PC-9 (cell line): ENCODE measurements at regions of chr9 and their contacts with region 1.

Region 1: GRCh38 chr9:14428781-14429230 is 114.9 kb upstream of the NFIB start:
- DNase-seq: peak; percentile 37 to 49
- H3K4me3 ChIP-seq: no peak overlapping the region
- H3K27ac ChIP-seq: no peak overlapping the region
- H3K4me1 ChIP-seq: peaks cover 16% of the 10 kb centered on the region; the same call in 1 of the 2 replicates
- H3K27me3 ChIP-seq: no peaks in the 10 kb centered on the region
- CTCF ChIP-seq: peak; percentile 78

Region 2: DNA sequence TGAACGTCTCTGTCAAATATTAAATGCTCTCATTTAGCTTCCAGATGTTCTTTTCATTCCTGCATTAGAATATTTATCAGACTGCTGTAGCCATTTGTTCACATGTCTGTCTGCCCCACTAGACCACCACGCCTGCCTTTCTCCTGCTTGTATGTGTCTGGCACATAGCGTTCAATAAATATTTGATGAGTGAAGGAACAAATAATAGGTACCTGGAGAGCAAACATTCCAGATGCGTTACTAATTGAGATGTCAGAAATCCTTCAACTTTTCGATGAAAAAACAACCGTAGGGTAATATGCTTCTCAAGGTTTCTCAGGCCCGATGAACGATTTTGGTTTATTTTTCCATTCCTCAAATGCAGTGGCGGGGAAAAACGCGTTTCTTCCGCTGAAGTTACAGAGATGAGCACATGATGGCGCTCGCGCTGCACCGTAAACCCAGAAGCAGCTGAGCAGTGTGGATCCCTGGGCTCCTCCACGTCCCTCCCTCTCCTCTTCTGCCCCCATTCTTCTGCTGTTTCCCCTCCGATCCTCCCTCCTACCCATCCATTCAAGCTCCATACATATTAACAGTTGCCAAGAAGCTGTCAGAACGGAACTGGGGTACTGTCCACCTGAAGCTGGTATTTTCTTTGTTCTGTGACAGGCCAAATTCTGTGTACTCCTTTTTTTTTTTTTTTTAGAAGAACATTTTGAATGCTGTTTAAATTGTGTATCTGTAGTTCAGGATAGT is 1394.7 kb before region 1 on chr9:
- CTCF ChIA-PET with region 1: no interaction called
- POLR2A ChIA-PET with region 1: no interaction called
- intact Hi-C with region 1: loop called (anchors 2 kb)
- DNase-seq: peak; percentile 37 to 57
- H3K4me3 ChIP-seq: peak overlapping the region; percentile 37; the same call in 1 of the 2 replicates
- H3K27ac ChIP-seq: no peak overlapping the region
- H3K4me1 ChIP-seq: no peaks in the 10 kb centered on the region
- H3K27me3 ChIP-seq: no peaks in the 10 kb centered on the region
- CTCF ChIP-seq: peak; percentile 75

Region 3: DNA sequence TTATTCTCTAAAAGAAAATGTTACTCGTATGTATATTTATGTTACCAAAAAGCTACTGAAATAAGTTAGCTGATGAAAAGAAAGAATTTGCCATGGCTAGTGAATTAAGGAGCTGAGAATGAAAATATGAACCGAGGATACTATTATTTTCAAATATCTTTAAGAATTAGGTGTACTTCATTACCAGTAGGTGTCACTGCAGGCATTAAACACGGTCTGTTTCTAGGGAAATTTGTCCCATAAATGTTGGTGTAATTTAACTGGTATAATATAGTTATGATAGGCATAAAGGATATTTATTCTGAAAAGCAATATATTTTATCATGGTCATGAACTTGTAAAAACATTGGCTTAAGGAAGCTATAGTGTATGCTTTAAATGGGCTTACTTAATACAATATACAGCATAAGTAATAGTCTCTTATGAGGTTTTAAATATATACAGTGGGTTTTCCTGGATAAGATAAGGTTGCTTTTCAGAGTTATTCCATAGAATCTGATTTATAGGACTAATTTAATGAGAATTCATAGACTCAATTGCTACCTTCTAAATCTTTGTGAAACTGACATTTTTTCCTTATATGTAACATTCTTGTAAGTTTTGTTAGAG is 1076.9 kb before region 1 on chr9:
- CTCF ChIA-PET with region 1: no interaction called
- POLR2A ChIA-PET with region 1: no interaction called
- intact Hi-C with region 1: loop called (anchors 5 kb)
- DNase-seq: no peak
- H3K4me3 ChIP-seq: no peak overlapping the region
- H3K27ac ChIP-seq: no peak overlapping the region
- H3K4me1 ChIP-seq: no peaks in the 10 kb centered on the region
- H3K27me3 ChIP-seq: no peaks in the 10 kb centered on the region
- CTCF ChIP-seq: peak; percentile 63

Region 4: DNA sequence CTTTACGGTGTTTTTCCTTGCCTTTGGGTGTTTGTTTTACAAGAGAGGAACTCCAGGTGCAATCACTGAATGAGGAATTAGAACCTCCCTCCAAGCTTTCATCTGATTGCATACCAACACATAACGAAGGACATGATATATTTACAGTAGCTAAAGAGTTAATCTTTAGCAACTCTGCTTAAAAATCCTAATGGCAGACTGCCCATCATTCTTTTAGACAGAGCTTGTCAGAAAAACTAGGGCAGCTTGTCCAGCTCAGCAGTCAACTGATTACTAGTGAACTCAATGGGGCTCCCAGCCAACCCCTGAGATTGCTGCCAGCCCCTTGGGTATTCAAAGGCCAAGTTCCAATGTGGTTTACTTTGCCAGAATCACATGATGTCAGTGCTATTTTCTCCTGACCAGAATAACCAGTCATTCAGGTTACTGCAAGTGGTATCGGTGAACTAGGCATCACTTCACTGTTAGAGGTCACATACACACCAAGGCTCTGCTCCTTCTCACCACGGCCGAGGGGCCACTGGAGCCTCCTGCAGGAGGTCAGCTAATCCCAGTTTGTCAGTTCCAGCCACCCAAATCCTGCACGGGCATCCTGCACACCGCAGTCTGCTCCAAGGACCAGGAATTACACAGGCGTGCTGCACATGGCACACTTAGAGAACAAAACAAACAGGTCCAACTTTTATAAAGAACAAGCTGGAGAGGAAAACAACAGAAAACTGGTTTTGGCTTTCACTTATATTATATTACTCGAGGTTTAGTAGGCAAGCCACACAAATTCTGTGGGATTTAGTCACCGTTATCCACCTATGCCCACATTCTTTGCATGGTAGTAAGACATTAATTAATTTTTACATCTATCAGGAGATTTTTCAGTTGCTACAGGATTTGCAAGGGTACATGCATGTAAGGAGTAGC is 177.4 kb before region 1 on chr9:
- CTCF ChIA-PET with region 1: no interaction called
- POLR2A ChIA-PET with region 1: no interaction called
- intact Hi-C with region 1: loop called (anchors 5 kb)
- DNase-seq: peak; percentile 81 to 96
- H3K4me3 ChIP-seq: peak overlapping the region; percentile 47; the same call in 1 of the 2 replicates
- H3K27ac ChIP-seq: peak overlapping the region; percentile 98
- H3K4me1 ChIP-seq: peaks cover 60% of the 10 kb centered on the region
- H3K27me3 ChIP-seq: no peaks in the 10 kb centered on the region
- CTCF ChIP-seq: no peak

Region 5: GRCh38 chr9:14281136-14281795 is 147.5 kb before region 1 on chr9:
- CTCF ChIA-PET with region 1: no interaction called
- POLR2A ChIA-PET with region 1: no interaction called
- intact Hi-C with region 1: no loop called
- DNase-seq: no peak
- H3K4me3 ChIP-seq: no peak overlapping the region
- H3K27ac ChIP-seq: no peak overlapping the region
- H3K4me1 ChIP-seq: no peaks in the 10 kb centered on the region
- H3K27me3 ChIP-seq: no peaks in the 10 kb centered on the region
- CTCF ChIP-seq: no peak

Region 6: DNA sequence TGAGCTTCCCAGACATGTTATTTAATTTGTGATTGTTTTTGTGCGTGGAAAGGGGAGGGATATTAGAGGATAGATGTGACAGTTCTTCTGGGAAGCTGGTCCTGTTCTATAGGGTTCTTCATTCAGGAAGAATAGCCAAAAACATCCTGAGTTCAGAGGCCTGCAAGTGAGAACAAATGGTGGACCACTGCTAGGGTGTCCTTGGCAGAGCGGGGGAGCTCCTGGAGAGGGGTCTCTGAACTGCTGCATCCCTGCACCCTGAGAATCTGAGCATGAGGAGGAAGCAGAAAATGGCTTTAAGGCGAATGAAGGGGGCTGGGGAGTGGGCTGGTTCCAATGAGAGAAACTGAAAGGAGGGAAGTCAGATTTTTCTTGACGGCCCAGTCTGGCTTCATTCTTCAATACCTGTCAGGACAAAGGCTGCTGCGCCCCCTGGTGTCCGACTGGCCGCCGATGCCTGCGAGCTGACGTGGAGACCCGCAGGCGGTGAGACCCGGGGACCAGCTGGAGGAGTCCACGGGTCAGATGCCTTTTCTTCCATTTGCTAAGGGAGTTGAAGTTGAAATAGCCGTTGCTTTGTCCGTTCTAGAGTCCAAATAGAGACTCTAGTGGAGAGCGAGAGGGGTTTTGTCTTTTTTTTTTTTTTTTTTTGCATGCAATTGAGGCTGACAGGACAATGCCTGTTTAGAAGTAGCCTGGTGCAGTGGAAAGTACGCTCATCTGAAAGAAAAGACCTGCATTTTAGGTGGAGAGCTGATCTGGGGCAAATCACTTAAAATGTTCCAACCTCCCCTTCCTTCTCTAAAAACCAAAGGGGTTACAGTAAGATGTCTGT is 75.4 kb before region 1 on chr9:
- CTCF ChIA-PET with region 1: interaction called, 10 read pairs
- POLR2A ChIA-PET with region 1: no interaction called
- intact Hi-C with region 1: loop called (anchors 5 kb)
- DNase-seq: peak; percentile 39 to 77
- H3K4me3 ChIP-seq: peak overlapping the region; percentile 29; the same call in 1 of the 2 replicates
- H3K27ac ChIP-seq: no peak overlapping the region
- H3K4me1 ChIP-seq: no peaks in the 10 kb centered on the region
- H3K27me3 ChIP-seq: no peaks in the 10 kb centered on the region
- CTCF ChIP-seq: peak; percentile 85